ENCODE measurements at regions of chr16 and their contacts with region 1.

Region 1: GRCh38 chr16:68064791-68065365 is 20.3 kb upstream of the NFATC3 start:
- DNase-seq: peak; percentile 85
- H3K4me3 Mint-ChIP-seq: no peak overlapping the region
- H3K27ac Mint-ChIP-seq: peak overlapping the region; percentile 88
- H3K4me1 Mint-ChIP-seq: peaks cover 83% of the 10 kb centered on the region
- H3K27me3 Mint-ChIP-seq: no peaks in the 10 kb centered on the region

Region 2: GRCh38 chr16:68040507-68041288 is 24.2 kb before region 1 on chr16:
- CTCF ChIA-PET with region 1: interaction called, 41 read pairs
- DNase-seq: peak; percentile 94
- H3K4me3 Mint-ChIP-seq: no peak overlapping the region
- H3K27ac Mint-ChIP-seq: peak overlapping the region; percentile 76
- H3K4me1 Mint-ChIP-seq: peaks cover 23% of the 10 kb centered on the region
- H3K27me3 Mint-ChIP-seq: no peaks in the 10 kb centered on the region

Region 3: GRCh38 chr16:68085259-68086071 is 20.6 kb after region 1 on chr16 and contains the start of gene NFATC3:
- CTCF ChIA-PET with region 1: interaction called, 64 read pairs
- DNase-seq: peak; percentile 99
- H3K4me3 Mint-ChIP-seq: peak within 1 kb of the TSS; percentile 87
- H3K27ac Mint-ChIP-seq: peak within 1 kb of the TSS; percentile 96
- H3K4me1 Mint-ChIP-seq: peaks cover 66% of the 10 kb centered on the region
- H3K27me3 Mint-ChIP-seq: no peaks in the 10 kb centered on the region

Region 4: GRCh38 chr16:68658258-68659008 is 593.6 kb after region 1 on chr16:
- CTCF ChIA-PET with region 1: no interaction called
- DNase-seq: no peak
- H3K4me3 Mint-ChIP-seq: no peak overlapping the region
- H3K27ac Mint-ChIP-seq: no peak overlapping the region
- H3K4me1 Mint-ChIP-seq: no peaks in the 10 kb centered on the region
- H3K27me3 Mint-ChIP-seq: peaks cover 13% of the 10 kb centered on the region